Cardiac septum (tissue), 1 donor: ENCODE measurements at regions of chr5 and their contacts with region 1.

Region 1: GRCh38 chr5:40904205-40904993 is 4.9 kb upstream of the C7 start:
- DNase-seq: no peak

Region 2: DNA sequence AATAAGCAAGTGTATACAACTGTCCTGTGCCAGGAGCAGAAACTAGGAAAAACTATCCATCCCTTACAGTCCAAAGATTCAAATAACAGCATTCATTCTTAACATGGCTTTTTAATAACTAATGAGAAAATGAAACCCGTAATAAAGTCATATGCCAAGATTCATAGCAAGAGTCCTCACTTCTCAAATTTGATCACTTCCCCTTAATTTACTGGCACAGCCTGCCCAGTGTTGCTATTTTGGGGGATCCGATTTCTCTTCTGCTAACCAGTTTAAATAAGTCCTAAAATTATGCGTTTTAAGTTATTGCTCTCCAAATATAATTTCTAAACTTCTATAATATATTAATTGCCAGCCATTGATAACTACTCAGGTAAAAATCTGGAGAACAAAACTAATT is 401.7 kb before region 1 on chr5:
- intact Hi-C with region 1: no loop called
- DNase-seq: no peak

Region 3: GRCh38 chr5:40557501-40557900 is 346.9 kb before region 1 on chr5:
- intact Hi-C with region 1: no loop called
- DNase-seq: no peak

Region 4: GRCh38 chr5:40914835-40915234 is 10.4 kb after region 1 on chr5:
- intact Hi-C with region 1: no loop called
- DNase-seq: no peak

Region 5: DNA sequence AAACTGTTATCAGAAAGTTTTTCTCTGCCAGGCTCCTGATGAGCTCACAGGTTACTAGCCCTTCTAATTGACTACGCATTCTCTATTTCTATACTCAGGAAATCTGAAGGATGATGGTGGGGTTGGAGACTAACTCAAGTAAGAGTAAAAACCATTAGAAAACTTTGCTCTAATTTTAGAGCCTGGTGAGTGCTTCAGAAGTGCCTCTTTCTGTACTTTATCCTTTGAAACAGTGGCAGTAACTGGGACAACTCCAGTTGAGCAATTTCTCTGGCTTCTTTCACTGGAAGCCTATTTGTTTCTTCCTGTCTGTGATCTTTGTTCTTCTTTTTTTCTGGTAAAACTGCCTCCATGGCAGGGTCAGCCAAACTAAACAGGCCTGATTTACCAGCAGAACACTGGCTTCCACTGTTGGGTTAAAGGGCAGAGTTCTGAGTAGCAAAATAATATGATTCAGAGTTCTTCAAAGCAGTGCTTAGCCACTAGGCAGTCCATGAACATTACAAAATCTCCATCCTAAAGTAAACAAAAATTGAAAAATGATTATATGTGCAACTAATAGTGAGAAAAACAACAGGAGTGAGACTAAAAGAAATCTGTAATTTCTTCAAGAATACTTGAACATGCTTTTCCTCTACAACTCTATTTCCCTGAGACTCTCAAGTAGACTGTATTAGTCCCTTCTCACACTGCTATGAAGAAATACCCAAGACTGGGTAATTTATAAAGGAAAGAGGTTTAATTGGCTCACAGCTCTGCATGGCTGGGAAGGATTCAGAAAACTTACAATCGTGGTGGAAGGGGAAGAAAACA is 87.0 kb after region 1 on chr5:
- intact Hi-C with region 1: loop called (anchors 5 kb)
- DNase-seq: no peak

Region 6: DNA sequence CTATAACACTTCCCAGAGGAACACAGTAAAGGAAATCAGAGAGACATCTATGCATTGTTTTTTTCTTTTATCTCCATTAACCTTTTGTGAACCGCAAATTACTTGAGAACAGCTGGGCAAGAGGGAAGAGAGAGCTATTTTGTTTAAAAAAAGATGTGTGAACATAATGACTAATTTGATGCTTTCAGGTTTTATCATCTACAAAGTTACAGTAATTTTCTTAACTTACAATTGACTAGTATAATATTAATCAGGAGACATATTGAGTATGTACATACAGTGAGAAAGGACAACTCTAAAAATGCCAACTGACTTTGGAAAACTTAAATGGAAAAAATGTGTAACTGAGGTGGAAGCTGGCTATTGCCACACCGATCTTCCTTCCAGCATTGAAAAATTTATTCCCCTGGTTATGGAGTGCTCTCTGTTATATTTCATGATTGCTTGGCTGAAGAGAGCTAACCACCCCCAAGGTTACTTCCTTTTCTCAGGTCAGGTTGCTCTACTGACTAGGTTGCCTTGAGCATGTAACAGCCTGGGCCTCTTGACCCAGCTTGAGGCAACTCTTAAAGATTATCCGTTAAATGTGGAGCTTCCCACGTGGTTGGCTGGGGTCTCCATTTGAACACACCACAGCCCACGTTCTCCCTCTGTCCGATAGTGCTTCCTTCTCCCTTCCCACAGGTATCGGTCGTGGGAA is 371.6 kb after region 1 on chr5:
- intact Hi-C with region 1: loop called (anchors 2 kb)
- DNase-seq: no peak

Region 7: DNA sequence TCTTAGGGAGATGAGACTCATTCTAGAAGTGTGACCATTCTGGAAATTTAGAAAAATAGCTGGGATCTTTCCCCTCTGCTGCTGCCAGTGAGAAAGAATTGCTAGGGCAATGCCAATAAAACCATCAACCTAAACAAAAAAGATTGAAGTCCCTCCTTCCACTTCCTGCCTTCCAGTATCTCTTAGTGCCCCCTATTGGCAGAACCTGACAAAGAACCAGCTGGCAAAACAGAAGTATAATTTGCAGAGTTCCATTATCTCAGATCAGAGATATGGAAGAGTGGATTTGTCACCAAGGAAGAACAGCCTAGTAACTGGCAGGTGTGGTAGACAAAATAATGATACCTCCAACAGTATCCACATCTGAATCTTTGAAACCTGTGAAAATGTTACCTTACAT is 619.8 kb after region 1 on chr5:
- intact Hi-C with region 1: loop called (anchors 5 kb)
- DNase-seq: no peak

Region 8: DNA sequence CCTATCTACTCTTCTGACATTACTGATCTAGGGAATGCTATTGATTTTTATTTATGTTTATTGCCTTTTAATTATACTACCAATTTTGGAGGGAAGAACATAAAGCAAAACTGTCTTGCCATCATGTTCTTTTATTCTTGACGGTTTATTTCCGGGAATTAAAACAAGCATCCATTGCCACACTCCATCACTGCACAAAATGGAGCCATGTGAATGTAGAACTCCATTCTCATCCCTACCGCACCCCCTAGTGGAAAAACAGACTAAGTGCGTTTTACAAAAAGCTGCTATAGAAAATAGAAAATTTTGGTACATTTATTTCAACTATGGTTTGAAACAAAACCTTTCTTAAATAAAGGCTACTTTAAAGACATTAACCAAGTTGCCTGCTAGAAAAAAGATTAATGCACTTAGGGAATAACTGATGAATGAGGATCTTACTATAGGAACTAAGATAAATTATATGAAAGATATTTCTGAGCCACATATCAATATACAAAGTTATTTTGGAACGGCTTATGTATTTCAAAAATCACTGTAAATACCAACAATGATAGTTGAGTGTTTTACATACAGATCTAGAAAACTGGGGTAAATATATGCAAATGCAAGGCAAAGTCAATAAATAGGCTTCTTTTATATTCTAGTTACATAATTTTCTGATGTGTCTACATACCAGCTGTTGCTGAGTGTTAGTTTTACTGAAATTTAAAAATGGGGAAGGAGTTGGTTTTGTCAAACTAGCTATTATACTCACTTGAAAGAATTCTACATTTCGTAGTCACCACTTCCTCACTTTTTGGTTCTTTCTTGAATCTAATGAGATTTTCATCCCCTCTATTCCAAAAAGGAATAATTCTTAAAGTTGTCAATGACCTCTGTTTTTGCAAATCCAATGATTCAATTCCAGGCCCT is 939.3 kb after region 1 on chr5:
- intact Hi-C with region 1: loop called (anchors 5 kb)
- DNase-seq: no peak